Panc1 (cell line): ENCODE measurements at regions of chr19 and their contacts with region 1.

Region 1: GRCh38 chr19:38527466-38528136 is 90.2 kb downstream of the MAP4K1 start:
- DNase-seq: no peak
- ATAC-seq: peak; percentile 20
- H3K4me3 ChIP-seq: peak overlapping the region in 1 of 2 experiments; percentile 32; a peak in 2 of 4 replicates
- H3K27ac ChIP-seq: no peak overlapping the region
- H3K4me1 ChIP-seq: peaks cover 4% of the 10 kb centered on the region; the same call in 1 of the 2 replicates
- H3K27me3 ChIP-seq: no peaks in the 10 kb centered on the region
- CTCF ChIP-seq: no peak

Region 2: GRCh38 chr19:38606131-38606530 is 78.5 kb after region 1 on chr19:
- CTCF ChIA-PET with region 1: no interaction called
- POLR2A ChIA-PET with region 1: no interaction called
- in situ Hi-C with region 1: loop called (anchors 5 kb)
- intact Hi-C with region 1: no loop called
- DNase-seq: no peak
- ATAC-seq: peak; percentile 35
- H3K4me3 ChIP-seq: no peak overlapping the region
- H3K27ac ChIP-seq: no peak overlapping the region
- H3K4me1 ChIP-seq: no peaks in the 10 kb centered on the region
- H3K27me3 ChIP-seq: no peaks in the 10 kb centered on the region
- CTCF ChIP-seq: no peak

Region 3: DNA sequence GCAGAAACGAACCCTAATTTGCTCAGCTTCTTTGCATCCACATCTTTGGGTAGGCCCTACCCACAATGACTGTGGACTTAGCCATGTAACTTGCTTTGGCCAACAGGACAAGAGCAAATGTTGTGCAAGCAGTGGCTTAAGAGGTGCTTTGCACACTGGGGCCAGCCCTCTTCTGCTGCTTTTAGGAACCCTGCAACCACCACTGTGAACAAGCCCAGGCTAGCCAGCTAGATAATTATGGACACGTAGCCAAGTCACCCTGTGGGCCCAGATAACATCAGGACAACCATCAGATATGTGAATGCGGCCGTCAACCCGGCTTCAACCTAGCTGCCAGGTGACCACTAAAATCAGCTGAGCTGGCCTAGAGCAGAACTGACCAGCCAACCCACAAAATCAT is 1803.5 kb after region 1 on chr19:
- CTCF ChIA-PET with region 1: no interaction called
- POLR2A ChIA-PET with region 1: interaction called, 13 read pairs
- in situ Hi-C with region 1: no loop called
- intact Hi-C with region 1: no loop called
- DNase-seq: no peak
- ATAC-seq: no peak
- H3K4me3 ChIP-seq: no peak overlapping the region
- H3K27ac ChIP-seq: no peak overlapping the region
- H3K4me1 ChIP-seq: no peaks in the 10 kb centered on the region
- H3K27me3 ChIP-seq: no peaks in the 10 kb centered on the region
- CTCF ChIP-seq: no peak